ENCODE measurements at regions of chr1 and their contacts with region 1.

Region 1: GRCh38 chr1:21937372-21938221 is 487 bp upstream of the HSPG2 start:
- DNase-seq: no peak
- ATAC-seq: peak; percentile 71
- H3K4me3 ChIP-seq: peak overlapping the region; percentile 33 to 51
- H3K27ac ChIP-seq: peak overlapping the region; percentile 93
- H3K4me1 ChIP-seq: peaks cover 64% of the 10 kb centered on the region
- H3K27me3 ChIP-seq: no peaks in the 10 kb centered on the region
- CTCF ChIP-seq: no peak

Region 2: DNA sequence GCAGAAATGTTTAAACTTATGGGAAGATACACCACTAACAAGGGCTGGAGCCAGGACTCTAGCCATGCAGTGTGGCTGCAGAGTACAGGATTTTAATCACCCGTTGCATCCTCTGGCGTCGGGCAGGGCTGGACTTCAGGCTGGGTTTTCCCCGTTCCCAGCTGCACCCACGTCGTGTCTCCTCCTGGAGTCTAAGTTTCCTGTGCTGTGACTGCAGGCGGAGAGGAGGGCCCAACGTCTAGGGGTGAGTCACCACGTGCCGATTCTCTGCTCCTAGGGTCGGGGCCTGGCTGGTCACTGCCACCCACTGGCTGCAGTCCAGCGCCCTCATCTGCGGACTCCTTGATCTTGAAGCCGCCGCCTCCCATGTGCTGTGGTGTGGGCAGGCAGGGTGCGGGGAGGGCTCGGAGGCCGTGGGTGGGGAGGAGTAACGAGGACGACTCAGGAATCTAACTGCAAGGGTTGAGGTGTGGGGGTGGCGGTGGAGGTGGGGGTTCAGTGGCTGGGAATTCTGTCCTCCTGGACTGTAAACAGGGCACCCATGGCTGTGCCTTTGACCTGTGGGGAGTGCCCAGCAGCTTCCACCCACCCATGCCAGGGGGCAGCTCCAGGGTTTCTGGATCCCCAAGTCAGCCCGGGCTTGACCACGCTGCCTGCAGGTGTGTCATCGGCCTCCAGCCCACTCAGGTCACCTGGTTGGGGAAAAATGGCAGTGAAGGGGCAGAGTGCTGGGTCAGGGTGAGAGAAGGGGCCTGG is 350.6 kb before region 1 on chr1:
- CTCF ChIA-PET with region 1: interaction called, 13 read pairs
- POLR2A ChIA-PET with region 1: no interaction called
- in situ Hi-C with region 1: no loop called
- intact Hi-C with region 1: no loop called
- DNase-seq: no peak
- ATAC-seq: peak; percentile 88
- H3K4me3 ChIP-seq: no peak overlapping the region
- H3K27ac ChIP-seq: no peak overlapping the region
- H3K4me1 ChIP-seq: peaks cover 11% of the 10 kb centered on the region
- H3K27me3 ChIP-seq: no peaks in the 10 kb centered on the region
- CTCF ChIP-seq: no peak

Region 3: DNA sequence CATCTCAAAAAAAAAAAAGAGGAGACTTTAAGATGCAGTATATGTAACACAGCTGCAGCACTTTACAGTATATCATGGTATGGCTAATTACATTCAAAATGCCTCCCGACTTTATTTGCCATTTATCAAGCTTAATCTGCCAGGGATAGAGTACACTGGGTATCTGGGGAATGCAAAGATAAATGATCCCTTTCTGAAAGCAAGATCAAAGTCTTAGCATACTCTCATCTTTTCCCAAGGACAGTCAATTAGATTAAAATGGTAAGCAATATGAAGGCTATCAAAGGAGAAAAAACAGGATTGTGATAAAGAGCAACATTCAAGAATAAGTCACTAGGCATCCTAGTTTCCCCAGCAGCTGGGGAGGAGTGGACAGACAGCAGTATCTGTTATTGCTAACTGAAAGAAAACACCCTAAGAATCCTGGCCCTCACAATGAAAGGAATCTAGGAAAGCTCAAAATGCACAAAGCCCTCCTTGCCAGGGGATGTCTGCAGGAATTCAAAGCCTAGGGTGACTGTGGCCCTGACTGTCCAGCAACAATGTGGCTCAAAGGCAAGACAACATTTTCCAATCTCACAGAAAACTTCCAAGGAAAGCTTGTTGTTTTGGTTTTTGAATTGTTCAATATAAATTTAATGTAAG is 211.7 kb before region 1 on chr1:
- CTCF ChIA-PET with region 1: no interaction called
- POLR2A ChIA-PET with region 1: interaction called, 10 read pairs
- in situ Hi-C with region 1: no loop called
- intact Hi-C with region 1: no loop called
- DNase-seq: no peak
- ATAC-seq: no peak
- H3K4me3 ChIP-seq: no peak overlapping the region
- H3K27ac ChIP-seq: no peak overlapping the region
- H3K4me1 ChIP-seq: no peaks in the 10 kb centered on the region
- H3K27me3 ChIP-seq: no peaks in the 10 kb centered on the region
- CTCF ChIP-seq: no peak

Region 4: GRCh38 chr1:22077728-22078127 is 140.1 kb after region 1 on chr1:
- CTCF ChIA-PET with region 1: no interaction called
- POLR2A ChIA-PET with region 1: interaction called, 12 read pairs
- in situ Hi-C with region 1: no loop called
- intact Hi-C with region 1: no loop called
- DNase-seq: no peak
- ATAC-seq: no peak
- H3K4me3 ChIP-seq: no peak overlapping the region
- H3K27ac ChIP-seq: no peak overlapping the region
- H3K4me1 ChIP-seq: peaks cover 19% of the 10 kb centered on the region
- H3K27me3 ChIP-seq: no peaks in the 10 kb centered on the region
- CTCF ChIP-seq: no peak